B cell (primary cell): ENCODE measurements at regions of chr10 and their contacts with region 1.

Region 1: GRCh38 chr10:101130984-101131961 is at the start of gene TLX1:
- DNase-seq: peak; percentile 51
- ATAC-seq: peak; percentile 33
- H3K4me3 ChIP-seq: peak within 1 kb of the TSS in 3 of 5 experiments; percentile 15 to 27 (median 25)
- H3K4me3 Mint-ChIP-seq: peak within 1 kb of the TSS; percentile 64
- H3K27ac ChIP-seq: no peak within 1 kb of the TSS
- H3K27ac Mint-ChIP-seq: no peak within 1 kb of the TSS
- H3K4me1 ChIP-seq: peaks cover 48 to 65% of the 10 kb centered on the region in 2 donors
- H3K4me1 Mint-ChIP-seq: peaks cover 35% of the 10 kb centered on the region
- H3K27me3 ChIP-seq: peaks cover 0 to 93% (median 75%) of the 10 kb centered on the region in 4 experiments
- H3K27me3 Mint-ChIP-seq: peaks cover 72% of the 10 kb centered on the region
- CTCF ChIP-seq: no peak
- total RNA-seq, gene TLX1: not detected in 2 replicates

Region 2: DNA sequence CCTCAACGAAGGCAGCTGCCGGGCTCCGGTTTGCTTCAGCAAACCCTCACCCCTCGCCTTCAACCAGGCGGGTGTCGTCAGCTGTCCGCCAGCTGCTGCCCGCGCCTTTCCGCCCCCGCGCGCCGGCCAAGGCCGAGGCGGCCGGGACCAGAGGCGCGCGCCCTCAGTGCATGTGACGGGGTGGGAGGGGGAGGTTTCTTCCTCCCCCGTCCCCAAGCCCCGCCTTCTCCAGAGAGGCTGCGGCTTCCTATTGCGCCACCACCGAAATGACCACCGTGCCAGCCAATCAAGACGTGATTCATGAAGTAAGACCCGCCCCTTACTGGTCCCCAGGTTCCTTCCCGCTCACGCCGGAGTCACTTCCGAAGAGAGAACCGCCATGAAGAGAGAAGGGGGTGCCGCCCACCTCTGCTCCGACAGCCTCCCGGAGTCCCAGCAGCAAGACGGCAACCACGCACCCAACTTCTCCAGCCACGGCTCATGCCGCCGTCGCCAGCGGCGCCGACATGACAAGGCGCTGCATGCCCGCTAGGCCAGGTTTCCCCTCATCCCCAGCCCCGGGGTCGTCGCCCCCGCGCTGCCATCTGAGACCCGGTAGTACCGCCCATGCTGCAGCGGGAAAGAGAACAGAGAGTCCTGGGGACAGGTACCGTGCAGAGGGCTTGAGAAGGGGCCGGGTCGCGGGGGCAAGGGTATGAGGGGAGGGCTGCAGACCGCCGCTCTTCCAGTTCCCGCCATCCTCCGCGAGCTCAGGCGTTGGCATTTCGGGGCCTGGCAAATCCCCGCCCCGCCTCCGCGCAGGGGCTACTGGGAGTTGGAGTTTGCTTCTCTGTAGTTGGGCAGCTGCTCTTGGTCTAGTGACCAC is 218.4 kb before region 1 on chr10 and contains the start of gene SLF2:
- CTCF ChIA-PET with region 1: no interaction called
- POLR2A ChIA-PET with region 1: no interaction called
- intact Hi-C with region 1: no loop called
- DNase-seq: peak; percentile 97
- ATAC-seq: peak; percentile 97
- H3K4me3 ChIP-seq: peak within 1 kb of the TSS; percentile 66 to 94 (median 90)
- H3K4me3 Mint-ChIP-seq: peak within 1 kb of the TSS; percentile 99
- H3K27ac ChIP-seq: peak within 1 kb of the TSS; percentile 66 to 90
- H3K27ac Mint-ChIP-seq: peak within 1 kb of the TSS; percentile 97
- H3K4me1 ChIP-seq: peaks cover 20% of the 10 kb centered on the region in 2 donors
- H3K4me1 Mint-ChIP-seq: peaks cover 34% of the 10 kb centered on the region
- H3K27me3 ChIP-seq: no peaks in the 10 kb centered on the region
- H3K27me3 Mint-ChIP-seq: no peaks in the 10 kb centered on the region
- CTCF ChIP-seq: no peak
- total RNA-seq, gene SLF2: 65.6 and 66.7 TPM in 2 replicates

Region 3: DNA sequence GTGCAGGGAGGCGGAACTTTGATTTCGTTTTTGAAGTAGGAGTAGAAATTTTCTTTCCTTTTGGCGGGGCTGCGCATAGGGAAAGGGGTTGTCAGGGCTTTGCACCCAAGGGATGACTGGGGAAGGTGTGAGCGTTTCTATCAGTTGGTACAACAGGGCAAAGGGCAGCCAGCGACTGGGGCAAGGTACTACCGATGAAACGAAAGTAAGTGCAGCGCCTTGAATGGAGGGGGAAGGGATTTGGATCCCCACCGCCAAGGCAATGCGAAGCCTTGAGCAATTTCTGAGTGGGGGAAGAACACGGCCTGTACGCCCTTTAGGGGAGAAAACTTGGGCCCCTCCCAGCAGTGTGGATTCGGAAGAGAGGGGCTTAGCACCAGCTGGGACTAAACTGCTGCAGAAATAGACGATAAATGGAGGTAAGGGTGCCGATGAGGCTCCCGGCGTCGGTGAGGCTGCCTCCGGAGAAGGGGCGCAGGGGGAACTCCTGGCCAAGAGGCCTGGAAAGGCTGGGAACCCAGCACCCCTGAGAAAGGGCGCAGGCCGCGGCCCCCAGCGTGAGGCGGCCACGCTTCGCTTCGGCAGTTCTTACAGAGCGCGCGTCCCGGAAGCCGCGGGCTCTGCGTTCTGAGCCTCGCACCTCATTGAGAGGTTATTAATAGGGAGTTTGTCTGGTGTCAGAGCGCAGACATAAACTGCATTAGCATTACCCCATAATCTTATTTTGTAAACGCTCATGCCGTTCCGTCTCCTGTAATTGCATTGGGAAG is 10.2 kb before region 1 on chr10:
- CTCF ChIA-PET with region 1: interaction called, 10 read pairs
- POLR2A ChIA-PET with region 1: no interaction called
- intact Hi-C with region 1: no loop called
- DNase-seq: peak; percentile 68
- ATAC-seq: peak; percentile 83
- H3K4me3 ChIP-seq: peak overlapping the region; percentile 51 to 91 (median 68)
- H3K4me3 Mint-ChIP-seq: peak overlapping the region; percentile 94
- H3K27ac ChIP-seq: no peak overlapping the region
- H3K27ac Mint-ChIP-seq: peak overlapping the region; percentile 82
- H3K4me1 ChIP-seq: peaks cover 32% of the 10 kb centered on the region in 2 donors
- H3K4me1 Mint-ChIP-seq: peaks cover 33% of the 10 kb centered on the region
- H3K27me3 ChIP-seq: peaks cover 0 to 67% (median 43%) of the 10 kb centered on the region in 4 experiments
- H3K27me3 Mint-ChIP-seq: peaks cover 52% of the 10 kb centered on the region
- CTCF ChIP-seq: no peak

Region 4: DNA sequence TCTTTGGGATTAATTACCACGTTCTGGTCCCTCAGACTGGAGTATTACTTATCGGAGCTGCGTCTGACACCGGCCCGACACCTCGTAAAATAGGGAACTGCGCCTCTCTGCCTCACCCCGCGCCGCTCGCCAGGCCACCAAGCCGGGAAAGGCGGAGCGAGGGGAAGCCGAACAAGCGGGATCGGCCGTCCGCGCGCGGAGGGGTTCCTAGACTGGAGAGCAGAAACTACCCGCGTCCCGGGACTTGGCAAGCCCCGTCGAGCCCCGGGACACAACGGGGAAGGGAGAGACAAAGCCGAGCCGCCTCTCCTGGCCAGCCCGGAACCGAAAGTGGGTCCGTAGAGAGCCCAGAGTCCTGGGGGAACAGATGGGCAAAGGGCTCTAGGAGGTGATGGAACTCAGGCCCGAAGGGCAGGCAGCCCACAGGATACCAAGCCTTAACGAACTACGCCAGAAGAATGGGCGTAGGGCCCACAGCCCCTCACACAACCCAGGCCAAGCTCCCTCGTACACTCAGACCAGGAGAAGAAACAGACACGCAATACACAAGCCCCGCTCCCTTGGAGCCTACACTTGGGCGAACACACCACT is 91.5 kb after region 1 on chr10:
- CTCF ChIA-PET with region 1: no interaction called
- POLR2A ChIA-PET with region 1: no interaction called
- intact Hi-C with region 1: loop called (anchors 5 kb)
- DNase-seq: peak; percentile 70
- ATAC-seq: peak; percentile 26
- H3K4me3 ChIP-seq: peak overlapping the region in 4 of 5 experiments; percentile 30 to 63 (median 52)
- H3K4me3 Mint-ChIP-seq: peak overlapping the region; percentile 80
- H3K27ac ChIP-seq: no peak overlapping the region
- H3K27ac Mint-ChIP-seq: no peak overlapping the region
- H3K4me1 ChIP-seq: peaks cover 51 to 69% of the 10 kb centered on the region in 2 donors
- H3K4me1 Mint-ChIP-seq: peaks cover 51% of the 10 kb centered on the region
- H3K27me3 ChIP-seq: peaks cover 0 to 93% (median 80%) of the 10 kb centered on the region in 4 experiments
- H3K27me3 Mint-ChIP-seq: peaks cover 74% of the 10 kb centered on the region
- CTCF ChIP-seq: no peak